ENCODE measurements at regions of chr3 and their contacts with region 1.

Region 1: DNA sequence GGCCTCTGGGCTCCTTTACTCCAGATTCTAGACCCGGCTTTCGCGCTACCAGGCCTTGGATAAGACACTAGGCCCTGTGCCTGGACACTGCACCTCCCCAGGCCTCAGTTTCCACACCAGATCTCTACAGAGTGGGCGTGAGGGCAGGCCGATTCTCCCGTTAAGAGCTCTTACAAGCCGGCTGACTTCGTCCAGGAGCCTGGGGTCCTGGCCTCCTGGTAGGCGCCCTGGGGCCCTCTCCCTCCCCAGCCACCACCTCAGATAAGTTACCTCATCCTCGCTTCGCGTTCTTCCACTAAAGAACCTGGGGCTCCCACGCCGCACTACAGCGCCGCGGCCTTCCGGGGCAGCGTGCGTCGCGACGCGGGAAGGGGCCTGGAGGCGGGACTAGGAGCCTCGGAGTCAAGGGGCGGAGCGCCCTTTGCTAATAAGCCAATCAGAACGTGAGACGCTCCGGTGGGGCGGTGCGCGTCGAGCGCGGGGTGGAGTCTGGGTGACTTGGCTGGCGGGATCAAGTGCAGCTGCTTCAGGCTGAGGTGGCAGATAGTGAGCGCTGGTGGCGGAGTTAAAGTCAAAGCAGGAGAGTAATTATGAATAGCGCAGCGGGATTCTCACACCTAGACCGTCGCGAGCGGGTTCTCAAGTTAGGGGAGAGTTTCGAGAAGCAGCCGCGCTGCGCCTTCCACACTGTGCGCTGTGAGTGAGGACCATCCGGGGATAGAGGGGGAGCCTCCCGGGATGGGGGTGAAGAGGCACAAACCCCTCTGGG is at the starts of genes EAF2 and IQCB1:
- DNase-seq: peak; percentile 98
- ATAC-seq: peak; percentile 98
- H3K4me3 Mint-ChIP-seq: peak within 1 kb of the TSS; percentile 98
- H3K27ac Mint-ChIP-seq: peak within 1 kb of the TSS; percentile 94
- H3K4me1 Mint-ChIP-seq: peaks cover 38% of the 10 kb centered on the region
- H3K27me3 Mint-ChIP-seq: no peaks in the 10 kb centered on the region
- total RNA-seq, gene EAF2: 12.4 to 12.9 TPM
- total RNA-seq, gene IQCB1: 41.3 to 42.8 TPM

Region 2: GRCh38 chr3:121488628-121489027 is 346.3 kb before region 1 on chr3:
- CTCF ChIA-PET with region 1: no interaction called
- POLR2A ChIA-PET with region 1: no interaction called
- intact Hi-C with region 1: no loop called
- DNase-seq: no peak
- ATAC-seq: no peak
- H3K4me3 Mint-ChIP-seq: no peak overlapping the region
- H3K27ac Mint-ChIP-seq: no peak overlapping the region
- H3K4me1 Mint-ChIP-seq: no peaks in the 10 kb centered on the region
- H3K27me3 Mint-ChIP-seq: no peaks in the 10 kb centered on the region

Region 3: DNA sequence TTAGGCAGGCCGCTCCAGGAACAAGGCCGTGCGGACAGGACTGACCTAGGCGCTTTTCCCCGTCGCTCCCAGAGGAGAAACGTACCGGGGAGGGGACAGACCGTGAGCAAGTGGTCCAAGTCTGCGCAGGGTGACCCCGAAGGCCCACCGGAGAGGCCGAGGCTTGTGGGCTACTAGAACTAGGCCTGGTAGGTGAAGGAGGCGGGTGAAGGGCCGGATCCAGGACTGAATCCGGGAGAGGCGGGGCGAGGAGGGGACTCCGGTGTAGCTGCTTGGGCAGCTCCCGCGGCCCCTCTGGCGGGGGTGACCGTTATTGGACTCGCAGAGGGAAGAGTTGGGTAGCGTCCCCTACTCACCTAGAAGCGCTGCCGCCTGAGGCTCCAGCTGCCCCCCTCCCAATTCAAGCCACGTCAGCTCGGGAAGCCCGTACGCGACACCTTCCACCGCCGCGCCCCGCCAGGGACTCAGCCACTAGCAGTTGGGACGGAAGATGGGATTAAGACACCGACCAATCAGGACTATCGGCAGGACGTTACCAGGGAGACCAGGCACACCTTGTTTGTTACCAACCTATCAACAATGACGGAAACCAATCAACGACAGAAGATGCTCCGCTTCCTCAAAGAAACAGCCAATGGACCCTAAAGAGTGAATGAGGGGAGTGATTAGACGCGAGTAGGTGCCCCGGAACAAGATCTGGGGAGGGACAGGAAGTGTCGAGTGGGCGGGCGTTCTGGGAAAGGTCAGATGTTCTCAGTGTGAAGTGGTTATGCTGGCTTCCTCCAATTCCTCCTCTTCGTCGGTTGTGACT is 85.4 kb before region 1 on chr3 and contains the start of gene GOLGB1:
- CTCF ChIA-PET with region 1: no interaction called
- POLR2A ChIA-PET with region 1: no interaction called
- intact Hi-C with region 1: loop called (anchors 1 kb)
- DNase-seq: peak; percentile 96
- ATAC-seq: peak; percentile 98
- H3K4me3 Mint-ChIP-seq: no peak within 1 kb of the TSS
- H3K27ac Mint-ChIP-seq: peak within 1 kb of the TSS; percentile 60
- H3K4me1 Mint-ChIP-seq: peaks cover 10% of the 10 kb centered on the region
- H3K27me3 Mint-ChIP-seq: no peaks in the 10 kb centered on the region
- total RNA-seq, gene GOLGB1: 19.0 to 19.5 TPM

Region 4: DNA sequence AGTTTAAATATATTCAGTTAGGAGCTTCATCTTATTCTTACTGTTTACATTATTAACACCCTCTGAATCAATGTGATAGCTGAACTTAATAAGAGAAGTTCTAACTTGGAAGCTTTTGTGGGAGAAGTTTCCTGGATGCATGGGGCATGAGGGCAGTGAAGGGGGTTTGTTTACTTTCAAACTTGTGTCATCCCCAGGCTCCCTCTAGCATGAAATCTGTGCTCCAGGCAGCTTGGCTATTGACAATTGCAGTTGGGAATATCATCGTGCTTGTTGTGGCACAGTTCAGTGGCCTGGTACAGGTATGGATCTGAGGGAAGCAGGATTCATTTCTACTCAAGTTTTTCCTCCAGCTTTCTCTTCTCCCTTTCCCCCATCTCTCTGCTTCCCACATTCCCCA is 105.3 kb after region 1 on chr3:
- CTCF ChIA-PET with region 1: no interaction called
- POLR2A ChIA-PET with region 1: no interaction called
- intact Hi-C with region 1: no loop called
- DNase-seq: no peak
- ATAC-seq: no peak
- H3K4me3 Mint-ChIP-seq: no peak overlapping the region
- H3K27ac Mint-ChIP-seq: no peak overlapping the region
- H3K4me1 Mint-ChIP-seq: no peaks in the 10 kb centered on the region
- H3K27me3 Mint-ChIP-seq: no peaks in the 10 kb centered on the region

Region 5: GRCh38 chr3:121957674-121958415 is 123.0 kb after region 1 on chr3:
- CTCF ChIA-PET with region 1: no interaction called
- POLR2A ChIA-PET with region 1: no interaction called
- intact Hi-C with region 1: no loop called
- DNase-seq: no peak
- ATAC-seq: no peak
- H3K4me3 Mint-ChIP-seq: no peak overlapping the region
- H3K27ac Mint-ChIP-seq: no peak overlapping the region
- H3K4me1 Mint-ChIP-seq: no peaks in the 10 kb centered on the region
- H3K27me3 Mint-ChIP-seq: no peaks in the 10 kb centered on the region

Region 6: DNA sequence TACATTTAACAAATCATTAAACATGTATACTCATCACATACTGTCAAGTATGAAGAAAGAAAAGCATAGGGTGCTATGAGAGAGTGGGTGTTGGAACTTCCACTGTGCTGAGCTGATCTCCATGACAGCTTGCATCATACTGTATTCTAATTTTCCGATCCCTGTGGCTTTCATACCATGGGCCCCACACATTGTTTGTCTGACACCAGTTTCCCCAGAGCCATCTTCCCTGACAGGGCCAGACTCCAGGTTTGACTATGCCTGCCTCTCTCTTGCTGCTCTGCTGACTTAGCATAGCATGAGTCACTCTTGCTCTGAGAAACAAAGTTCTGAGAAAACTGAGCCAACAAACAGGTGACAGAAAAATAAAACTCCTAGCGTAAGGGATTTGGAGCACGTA is 311.6 kb after region 1 on chr3:
- CTCF ChIA-PET with region 1: no interaction called
- POLR2A ChIA-PET with region 1: no interaction called
- intact Hi-C with region 1: loop called (anchors 1 to 5 kb)
- DNase-seq: peak; percentile 88
- ATAC-seq: peak; percentile 99
- H3K4me3 Mint-ChIP-seq: no peak overlapping the region
- H3K27ac Mint-ChIP-seq: peak overlapping the region; percentile 83
- H3K4me1 Mint-ChIP-seq: peaks cover 32% of the 10 kb centered on the region
- H3K27me3 Mint-ChIP-seq: peaks cover 2% of the 10 kb centered on the region

Region 7: DNA sequence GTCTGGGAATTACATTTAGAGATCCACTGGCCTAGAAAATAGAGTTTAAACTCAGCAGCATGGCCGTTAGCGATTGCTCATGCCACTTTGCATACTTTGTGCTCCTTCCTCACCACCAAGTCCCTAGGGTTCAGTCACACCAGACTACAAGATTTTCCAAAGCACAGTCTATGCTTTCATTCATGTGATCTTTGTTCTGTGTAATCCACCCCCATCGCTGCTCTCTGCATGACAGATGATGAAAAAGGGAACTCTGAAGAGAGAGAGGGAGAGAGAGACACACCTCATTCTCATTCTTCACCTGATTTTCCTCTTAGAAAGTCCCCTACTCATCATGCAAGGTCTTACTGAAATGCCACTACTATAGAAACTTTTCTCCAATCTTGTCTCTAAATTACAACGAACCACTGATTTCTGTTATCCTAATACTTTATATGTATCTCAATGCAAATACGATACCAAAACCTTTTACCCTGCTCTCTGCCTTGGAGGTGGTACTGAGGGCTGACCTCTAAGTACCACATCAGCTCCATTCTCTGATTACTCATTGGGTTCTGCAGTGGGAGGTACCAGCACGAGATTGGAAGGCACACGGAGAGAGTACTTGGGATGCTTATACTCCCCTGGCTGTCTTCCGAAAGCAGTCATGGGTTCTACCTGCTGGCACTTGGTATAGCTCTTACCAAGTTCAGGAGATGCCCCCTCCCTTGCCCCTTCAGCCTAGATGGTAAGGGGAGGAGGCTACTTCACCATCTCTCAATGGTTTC is 741.5 kb after region 1 on chr3:
- CTCF ChIA-PET with region 1: no interaction called
- POLR2A ChIA-PET with region 1: no interaction called
- intact Hi-C with region 1: loop called in 1 of 2 experiments (anchors 1 kb)
- DNase-seq: peak; percentile 78
- ATAC-seq: peak; percentile 90
- H3K4me3 Mint-ChIP-seq: peak overlapping the region; percentile 24
- H3K27ac Mint-ChIP-seq: peak overlapping the region; percentile 87
- H3K4me1 Mint-ChIP-seq: peaks cover 58% of the 10 kb centered on the region
- H3K27me3 Mint-ChIP-seq: no peaks in the 10 kb centered on the region

Measured in activated CD4-positive, alpha-beta T cell treated with anti-CD3 and anti-CD28 coated beads for 36 hours (primary cell).